Panc1 (cell line): ENCODE measurements at regions of chr22 and their contacts with region 1.

Region 1: GRCh38 chr22:41940832-41941765 is 5.9 kb downstream of the CENPM start:
- DNase-seq: peak; percentile 51
- ATAC-seq: peak; percentile 88
- H3K4me3 ChIP-seq: no peak overlapping the region
- H3K27ac ChIP-seq: no peak overlapping the region; the same call in 1 of the 2 replicates
- H3K4me1 ChIP-seq: peaks cover 3% of the 10 kb centered on the region
- H3K27me3 ChIP-seq: no peaks in the 10 kb centered on the region
- CTCF ChIP-seq: peak; percentile 85

Region 2: GRCh38 chr22:41697126-41697775 is 243.8 kb before region 1 on chr22:
- CTCF ChIA-PET with region 1: interaction called, 13 read pairs
- POLR2A ChIA-PET with region 1: no interaction called
- in situ Hi-C with region 1: no loop called
- intact Hi-C with region 1: loop called (anchors 5 kb)
- DNase-seq: peak; percentile 71
- ATAC-seq: peak; percentile 94
- H3K4me3 ChIP-seq: peak overlapping the region in 1 of 2 experiments; percentile 32; a peak in 2 of 4 replicates
- H3K27ac ChIP-seq: no peak overlapping the region; the same call in 1 of the 2 replicates
- H3K4me1 ChIP-seq: no peaks in the 10 kb centered on the region
- H3K27me3 ChIP-seq: no peaks in the 10 kb centered on the region
- CTCF ChIP-seq: peak; percentile 93

Region 3: GRCh38 chr22:41888627-41889200 is 52.4 kb before region 1 on chr22:
- CTCF ChIA-PET with region 1: no interaction called
- POLR2A ChIA-PET with region 1: no interaction called
- in situ Hi-C with region 1: no loop called
- intact Hi-C with region 1: no loop called
- DNase-seq: no peak
- ATAC-seq: no peak
- H3K4me3 ChIP-seq: no peak overlapping the region
- H3K27ac ChIP-seq: no peak overlapping the region
- H3K4me1 ChIP-seq: no peaks in the 10 kb centered on the region
- H3K27me3 ChIP-seq: no peaks in the 10 kb centered on the region
- CTCF ChIP-seq: no peak